ENCODE measurements at regions of chr2 and their contacts with region 1.

Region 1: DNA sequence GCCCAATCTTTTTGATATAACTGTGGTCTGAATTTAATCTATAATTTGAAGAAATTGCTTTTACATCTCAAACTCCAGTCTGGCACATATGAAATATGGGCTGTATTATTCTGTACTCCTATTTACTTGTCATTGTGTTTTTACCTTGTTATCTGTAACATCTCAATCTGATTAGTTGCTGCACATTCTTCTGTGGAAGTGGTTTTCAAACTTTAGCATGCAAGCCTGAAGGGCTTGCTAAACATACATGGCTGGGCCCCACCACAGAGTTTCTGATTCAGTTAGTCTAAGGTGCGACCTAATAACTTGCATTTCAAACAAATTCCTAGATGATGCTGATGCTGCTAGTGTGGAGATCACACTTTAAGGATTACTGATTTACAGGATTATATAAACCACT is 928.2 kb upstream of the NXPH2 start:
- DNase-seq: no peak
- ATAC-seq: no peak
- H3K4me3 ChIP-seq: no peak overlapping the region
- H3K27ac ChIP-seq: no peak overlapping the region
- H3K4me1 ChIP-seq: no peaks in the 10 kb centered on the region
- H3K27me3 ChIP-seq: no peaks in the 10 kb centered on the region
- CTCF ChIP-seq: no peak
- EP300 ChIP-seq: no peak
- POLR2A ChIP-seq: no peak
- RAD21 ChIP-seq: no peak

Region 2: GRCh38 chr2:140242889-140243288 is 534.5 kb after region 1 on chr2:
- CTCF ChIA-PET with region 1: no interaction called
- POLR2A ChIA-PET with region 1: no interaction called
- in situ Hi-C with region 1: no loop called
- intact Hi-C with region 1: loop called (anchors 5 kb)
- DNase-seq: no peak
- ATAC-seq: no peak
- H3K4me3 ChIP-seq: no peak overlapping the region
- H3K27ac ChIP-seq: no peak overlapping the region
- H3K4me1 ChIP-seq: no peaks in the 10 kb centered on the region
- H3K27me3 ChIP-seq: no peaks in the 10 kb centered on the region
- CTCF ChIP-seq: no peak
- EP300 ChIP-seq: no peak
- POLR2A ChIP-seq: no peak
- RAD21 ChIP-seq: no peak